Caco-2 (cell line): ENCODE measurements at regions of chr11 and their contacts with region 1.

Region 1: GRCh38 chr11:47186076-47186936 is at the start of gene PACSIN3:
- DNase-seq: peak; percentile 71 to 79
- H3K4me3 ChIP-seq: peak within 1 kb of the TSS; percentile 74
- H3K4me3 Mint-ChIP-seq: peak within 1 kb of the TSS; percentile 92
- H3K27ac Mint-ChIP-seq: peak within 1 kb of the TSS; percentile 91
- H3K4me1 ChIP-seq: peaks cover 36% of the 10 kb centered on the region
- H3K4me1 Mint-ChIP-seq: peaks cover 11% of the 10 kb centered on the region
- H3K27me3 ChIP-seq: no peaks in the 10 kb centered on the region
- H3K27me3 Mint-ChIP-seq: no peaks in the 10 kb centered on the region
- CTCF ChIP-seq: no peak
- total RNA-seq, gene PACSIN3: 72.8 and 76.7 TPM in 2 replicates

Region 2: GRCh38 chr11:47051217-47051616 is 135.1 kb before region 1 on chr11:
- CTCF ChIA-PET with region 1: no interaction called
- POLR2A ChIA-PET with region 1: no interaction called
- intact Hi-C with region 1: no loop called
- DNase-seq: no peak
- H3K4me3 ChIP-seq: no peak overlapping the region
- H3K4me3 Mint-ChIP-seq: no peak overlapping the region
- H3K27ac Mint-ChIP-seq: no peak overlapping the region
- H3K4me1 ChIP-seq: peaks cover 13% of the 10 kb centered on the region
- H3K4me1 Mint-ChIP-seq: peaks cover 13% of the 10 kb centered on the region
- H3K27me3 ChIP-seq: no peaks in the 10 kb centered on the region
- H3K27me3 Mint-ChIP-seq: no peaks in the 10 kb centered on the region
- CTCF ChIP-seq: no peak

Region 3: GRCh38 chr11:47213985-47214564 is 27.8 kb after region 1 on chr11:
- CTCF ChIA-PET with region 1: interaction called, 25 read pairs
- POLR2A ChIA-PET with region 1: interaction called, 52 read pairs
- intact Hi-C with region 1: loop called (anchors 1 kb)
- DNase-seq: peak; percentile 89
- H3K4me3 ChIP-seq: peak overlapping the region; percentile 73
- H3K4me3 Mint-ChIP-seq: peak overlapping the region; percentile 79
- H3K27ac Mint-ChIP-seq: peak overlapping the region; percentile 88
- H3K4me1 ChIP-seq: peaks cover 17% of the 10 kb centered on the region
- H3K4me1 Mint-ChIP-seq: peaks cover 22% of the 10 kb centered on the region
- H3K27me3 ChIP-seq: no peaks in the 10 kb centered on the region
- H3K27me3 Mint-ChIP-seq: no peaks in the 10 kb centered on the region
- CTCF ChIP-seq: no peak

Region 4: GRCh38 chr11:47269002-47269828 is 82.9 kb after region 1 on chr11:
- CTCF ChIA-PET with region 1: no interaction called
- POLR2A ChIA-PET with region 1: interaction called, 4 read pairs
- intact Hi-C with region 1: loop called (anchors 1 kb)
- DNase-seq: peak; percentile 93 to 94
- H3K4me3 ChIP-seq: peak overlapping the region; percentile 92
- H3K4me3 Mint-ChIP-seq: peak overlapping the region; percentile 66
- H3K27ac Mint-ChIP-seq: peak overlapping the region; percentile 93
- H3K4me1 ChIP-seq: peaks cover 28% of the 10 kb centered on the region
- H3K4me1 Mint-ChIP-seq: peaks cover 28% of the 10 kb centered on the region
- H3K27me3 ChIP-seq: no peaks in the 10 kb centered on the region
- H3K27me3 Mint-ChIP-seq: no peaks in the 10 kb centered on the region
- CTCF ChIP-seq: peak in 1 of 2 experiments; percentile 16